Dorsolateral prefrontal cortex (tissue), 120 donors: ENCODE measurements at regions of chr6 and their contacts with region 1.

Region 1: GRCh38 chr6:149723771-149724417 is 6.0 kb upstream of the LATS1 start:
- DNase-seq: peak in 7 of 10 donors; percentile 39 to 74 (median 51)
- H3K4me3 ChIP-seq: peak overlapping the region in 1 of 59 donors; percentile 2
- H3K27ac ChIP-seq: peak overlapping the region in 6 of 59 donors; percentile 2 to 51 (median 25)
- H3K27me3 ChIP-seq: no peaks in the 10 kb centered on the region
- CTCF ChIP-seq: peak; percentile 36 to 84 (median 70)

Region 2: DNA sequence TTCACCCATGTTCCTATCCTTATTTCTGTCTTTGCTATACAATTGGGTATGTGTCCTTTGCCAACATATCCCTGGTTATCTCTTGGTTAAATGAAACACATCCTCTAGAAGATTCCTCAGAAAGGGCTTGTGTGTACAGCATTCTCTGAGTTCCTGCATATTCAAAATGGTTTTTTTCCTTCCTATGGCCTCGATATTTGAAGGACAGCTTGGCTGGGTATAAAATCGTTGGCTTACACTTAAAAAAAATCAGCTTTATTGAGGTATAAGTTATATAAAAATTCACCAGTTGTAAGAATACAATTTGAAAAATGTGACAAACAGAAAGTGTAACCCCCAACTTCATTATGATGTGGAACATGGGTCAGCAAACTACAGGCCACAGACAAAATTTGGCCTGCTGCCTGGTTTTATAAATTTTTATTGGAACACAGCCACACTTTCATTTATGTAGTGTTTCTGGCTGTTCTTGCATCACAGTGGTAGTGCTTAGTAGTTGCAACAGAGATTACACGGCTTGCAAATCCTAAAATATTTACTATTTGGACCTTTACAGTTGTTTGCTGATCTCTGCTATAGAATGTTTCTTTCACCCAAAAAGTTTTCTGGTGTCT is 42.4 kb after region 1 on chr6:
- intact Hi-C with region 1: no loop called
- DNase-seq: no peak
- H3K4me3 ChIP-seq: no peak overlapping the region
- H3K27ac ChIP-seq: no peak overlapping the region
- H3K27me3 ChIP-seq: no peaks in the 10 kb centered on the region
- CTCF ChIP-seq: no peak

Region 3: DNA sequence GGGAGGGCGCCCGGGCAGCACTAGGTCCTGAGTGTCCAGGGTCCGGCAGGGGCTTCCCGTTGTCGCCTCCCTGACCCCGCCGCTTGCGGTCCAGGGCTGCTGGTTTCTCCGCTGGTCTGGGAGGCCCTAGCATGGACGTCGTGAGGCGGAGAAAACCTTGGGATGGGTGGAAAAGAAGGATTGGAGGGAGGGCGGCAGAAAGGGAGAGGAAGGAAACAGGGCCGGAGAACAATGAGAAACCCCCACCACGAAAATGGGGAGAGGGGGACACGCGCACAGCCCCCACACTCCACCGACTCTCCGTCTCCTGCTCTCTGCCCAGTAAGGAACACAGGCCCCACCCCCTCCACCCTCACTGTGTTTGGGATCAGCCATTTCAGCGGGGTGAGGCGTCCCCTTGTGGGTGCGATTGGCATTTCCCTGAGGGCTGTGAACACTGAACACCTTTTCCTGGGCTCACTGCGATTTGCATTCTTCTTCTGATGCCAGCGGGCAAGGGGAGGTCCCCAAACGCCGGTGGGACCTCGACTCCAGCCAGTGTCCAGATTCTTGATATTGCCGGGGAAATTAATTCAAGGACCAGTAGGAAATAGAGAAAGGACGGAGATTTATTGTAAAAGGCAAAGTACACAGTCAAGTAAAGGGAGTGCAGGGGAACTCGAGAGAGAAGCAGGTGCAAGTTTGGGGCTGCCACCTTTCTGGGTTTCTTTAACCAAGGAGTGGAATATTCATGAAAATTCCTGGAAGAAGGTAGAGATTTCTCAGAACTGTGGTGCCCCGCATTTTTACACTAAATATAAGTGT is 202.3 kb after region 1 on chr6:
- intact Hi-C with region 1: loop called (anchors 5 to 10 kb)
- DNase-seq: peak; percentile 60 to 89 (median 82)
- H3K4me3 ChIP-seq: peak overlapping the region; percentile 25 to 69 (median 54)
- H3K27ac ChIP-seq: peak overlapping the region in 16 of 59 donors; percentile 6 to 73 (median 40)
- H3K27me3 ChIP-seq: peaks cover 0 to 99% (median 22%) of the 10 kb centered on the region in 45 donors
- CTCF ChIP-seq: peak; percentile 47 to 89 (median 70)

Region 4: DNA sequence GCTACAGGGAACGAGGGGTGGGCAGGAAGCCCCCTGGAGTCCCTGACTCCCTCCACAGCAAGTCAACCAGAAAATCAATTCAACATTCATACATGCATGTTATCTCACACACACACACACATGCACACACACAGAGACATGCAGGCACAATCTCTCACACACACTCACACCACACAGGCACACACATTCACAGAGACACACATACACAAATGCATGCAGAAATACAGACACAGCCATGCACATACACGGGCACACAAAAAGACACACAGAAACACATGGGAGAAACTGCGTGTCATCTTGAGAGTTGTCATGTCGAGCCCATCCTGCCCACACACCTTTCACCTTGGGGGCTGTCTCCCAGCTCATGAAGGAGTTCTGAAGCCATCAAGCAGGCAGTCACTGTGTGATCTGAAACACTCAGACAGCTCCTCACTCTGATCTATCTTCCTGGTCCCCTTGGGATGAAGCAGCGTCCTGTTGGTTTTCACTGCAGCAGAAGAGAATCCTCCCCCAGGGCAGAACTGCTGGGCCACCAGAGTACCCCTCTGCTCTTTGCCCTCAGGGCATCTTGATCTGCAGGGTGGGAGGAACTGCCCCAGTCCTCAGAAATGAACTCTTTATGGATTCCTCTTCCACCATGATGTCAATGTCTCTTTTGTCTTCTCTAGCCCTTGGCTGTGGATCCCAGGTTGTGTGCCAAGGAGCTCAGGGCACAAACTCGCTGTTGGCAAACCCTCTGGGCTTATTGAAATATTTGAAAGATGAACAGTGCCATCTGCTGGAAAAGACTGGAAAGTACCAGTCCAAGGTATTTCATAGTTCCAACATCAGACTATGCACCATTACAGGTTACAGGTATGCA is 292.7 kb after region 1 on chr6:
- intact Hi-C with region 1: loop called in 1 of 2 experiments (anchors 10 kb)
- DNase-seq: peak in 7 of 10 donors; percentile 54 to 82 (median 72)
- H3K4me3 ChIP-seq: no peak overlapping the region
- H3K27ac ChIP-seq: no peak overlapping the region
- H3K27me3 ChIP-seq: peaks cover 2 to 78% (median 57%) of the 10 kb centered on the region in 45 donors
- CTCF ChIP-seq: peak; percentile 60 to 92 (median 82)